ENCODE measurements at regions of chr15 and their contacts with region 1.

Region 1: GRCh38 chr15:84716036-84716799 is at the start of gene SEC11A:
- DNase-seq: peak; percentile 90
- ATAC-seq: peak; percentile 98
- H3K4me3 ChIP-seq: peak within 1 kb of the TSS; percentile 72 to 89 (median 84)
- H3K27ac ChIP-seq: peak within 1 kb of the TSS; percentile 90
- H3K4me1 ChIP-seq: peaks cover 26% of the 10 kb centered on the region
- H3K27me3 ChIP-seq: no peaks in the 10 kb centered on the region; a peak in 1 of 5 replicates
- CTCF ChIP-seq: peak; percentile 23; the same call in 1 of the 2 replicates
- EP300 ChIP-seq: 0 out of 4 replicates have a peak, but pooled peaks of 1 of the 2 experiments have one; percentile 3
- POLR2A ChIP-seq: peak; percentile 79
- RAD21 ChIP-seq: peak; percentile 54; the same call in 1 of the 2 replicates
- total RNA-seq, gene SEC11A: 194 and 230 TPM in 2 replicates

Region 2: GRCh38 chr15:84734794-84735479 is 18.7 kb after region 1 on chr15:
- CTCF ChIA-PET with region 1: no interaction called
- POLR2A ChIA-PET with region 1: interaction called, 31 read pairs
- in situ Hi-C with region 1: no loop called
- intact Hi-C with region 1: no loop called
- DNase-seq: peak; percentile 56
- ATAC-seq: peak; percentile 70
- H3K4me3 ChIP-seq: peak overlapping the region in 1 of 3 experiments; percentile 19; a peak in 1 of 6 replicates
- H3K27ac ChIP-seq: peak overlapping the region; percentile 17
- H3K4me1 ChIP-seq: peaks cover 25% of the 10 kb centered on the region
- H3K27me3 ChIP-seq: no peaks in the 10 kb centered on the region
- CTCF ChIP-seq: no peak
- EP300 ChIP-seq: no peak
- POLR2A ChIP-seq: no peak
- RAD21 ChIP-seq: no peak

Region 3: GRCh38 chr15:84810073-84810840 is 94.0 kb after region 1 on chr15:
- CTCF ChIA-PET with region 1: no interaction called
- POLR2A ChIA-PET with region 1: no interaction called
- in situ Hi-C with region 1: no loop called
- intact Hi-C with region 1: no loop called
- DNase-seq: no peak
- ATAC-seq: peak; percentile 39; the same call in 2 of the 3 replicates
- H3K4me3 ChIP-seq: no peak overlapping the region
- H3K27ac ChIP-seq: no peak overlapping the region
- H3K4me1 ChIP-seq: peaks cover 25% of the 10 kb centered on the region
- H3K27me3 ChIP-seq: no peaks in the 10 kb centered on the region
- CTCF ChIP-seq: no peak
- EP300 ChIP-seq: no peak
- POLR2A ChIP-seq: no peak
- RAD21 ChIP-seq: no peak